CD4-positive, alpha-beta T cell (primary cell): ENCODE measurements at regions of chr10 and their contacts with region 1.

Region 1: GRCh38 chr10:3911713-3912442 is 126.9 kb upstream of the KLF6 start:
- DNase-seq: no peak
- ATAC-seq: no peak
- H3K4me3 ChIP-seq: no peak overlapping the region
- H3K4me3 Mint-ChIP-seq: no peak overlapping the region
- H3K27ac ChIP-seq: no peak overlapping the region
- H3K27ac Mint-ChIP-seq: no peak overlapping the region
- H3K4me1 ChIP-seq: no peaks in the 10 kb centered on the region
- H3K4me1 Mint-ChIP-seq: no peaks in the 10 kb centered on the region
- H3K27me3 ChIP-seq: no peaks in the 10 kb centered on the region
- H3K27me3 Mint-ChIP-seq: no peaks in the 10 kb centered on the region
- CTCF ChIP-seq: no peak

Region 2: GRCh38 chr10:3248888-3249758 is 662.8 kb before region 1 on chr10:
- CTCF ChIA-PET with region 1: no interaction called
- POLR2A ChIA-PET with region 1: no interaction called
- intact Hi-C with region 1: loop called in 1 of 2 experiments (anchors 10 kb)
- DNase-seq: no peak
- ATAC-seq: no peak
- H3K4me3 ChIP-seq: no peak overlapping the region
- H3K4me3 Mint-ChIP-seq: no peak overlapping the region
- H3K27ac ChIP-seq: no peak overlapping the region
- H3K27ac Mint-ChIP-seq: no peak overlapping the region
- H3K4me1 ChIP-seq: no peaks in the 10 kb centered on the region
- H3K4me1 Mint-ChIP-seq: no peaks in the 10 kb centered on the region
- H3K27me3 ChIP-seq: peaks cover 0 to 7% of the 10 kb centered on the region in 2 experiments
- H3K27me3 Mint-ChIP-seq: peaks cover 32% of the 10 kb centered on the region
- CTCF ChIP-seq: no peak

Region 3: DNA sequence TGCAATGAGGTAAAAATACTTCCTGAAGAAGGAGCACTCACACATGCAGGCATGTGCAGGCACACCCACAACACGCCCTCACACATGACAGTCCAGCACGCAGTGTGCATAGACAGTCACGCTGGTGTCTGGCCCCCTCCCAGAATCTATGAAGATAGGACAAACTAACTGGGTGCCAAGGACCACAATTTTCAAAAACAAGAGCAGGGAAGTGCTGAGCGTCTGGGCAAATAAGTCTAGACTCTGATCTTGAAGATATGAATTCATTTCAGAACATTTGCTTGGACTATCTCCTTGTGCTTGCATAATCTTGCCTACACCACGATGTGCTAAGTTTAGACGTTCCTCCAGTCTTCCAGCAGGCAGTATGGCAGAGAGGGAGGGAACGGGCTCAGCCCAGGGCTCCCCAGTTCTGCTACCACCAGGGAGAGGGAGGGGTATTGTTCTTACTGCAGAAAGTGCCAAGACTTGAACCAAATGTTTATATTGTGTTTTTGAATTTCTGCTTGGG is 149.6 kb after region 1 on chr10:
- CTCF ChIA-PET with region 1: no interaction called
- POLR2A ChIA-PET with region 1: no interaction called
- intact Hi-C with region 1: no loop called
- DNase-seq: peak in 4 of 14 experiments; percentile 26 to 65 (median 32)
- ATAC-seq: peak; percentile 49
- H3K4me3 ChIP-seq: no peak overlapping the region
- H3K4me3 Mint-ChIP-seq: no peak overlapping the region
- H3K27ac ChIP-seq: no peak overlapping the region
- H3K27ac Mint-ChIP-seq: peak overlapping the region; percentile 35
- H3K4me1 ChIP-seq: peaks cover 24% of the 10 kb centered on the region
- H3K4me1 Mint-ChIP-seq: peaks cover 22% of the 10 kb centered on the region
- H3K27me3 ChIP-seq: no peaks in the 10 kb centered on the region
- H3K27me3 Mint-ChIP-seq: no peaks in the 10 kb centered on the region
- CTCF ChIP-seq: no peak